ENCODE measurements at regions of chr7 and their contacts with region 1.

Region 1: GRCh38 chr7:105876091-105876963 is at the start of gene ATXN7L1:
- DNase-seq: peak; percentile 95 to 96 (median 96)
- ATAC-seq: peak; percentile 92 to 97 (median 96)
- H3K4me3 ChIP-seq: peak within 1 kb of the TSS; percentile 66 to 90 (median 84)
- H3K27ac ChIP-seq: peak within 1 kb of the TSS; percentile 65 to 90 (median 84)
- H3K4me1 ChIP-seq: peaks cover 0 to 34% (median 10%) of the 10 kb centered on the region in 12 donors
- H3K27me3 ChIP-seq: peaks cover 0 to 3% (median 0%) of the 10 kb centered on the region in 9 donors
- CTCF ChIP-seq: peak in 11 of 12 donors; percentile 6 to 93 (median 64)
- POLR2A ChIP-seq: peak in 1 of 2 donors; percentile 65
- total RNA-seq, gene ATXN7L1: 2.3 to 10.6 (median 5.6) TPM

Region 2: DNA sequence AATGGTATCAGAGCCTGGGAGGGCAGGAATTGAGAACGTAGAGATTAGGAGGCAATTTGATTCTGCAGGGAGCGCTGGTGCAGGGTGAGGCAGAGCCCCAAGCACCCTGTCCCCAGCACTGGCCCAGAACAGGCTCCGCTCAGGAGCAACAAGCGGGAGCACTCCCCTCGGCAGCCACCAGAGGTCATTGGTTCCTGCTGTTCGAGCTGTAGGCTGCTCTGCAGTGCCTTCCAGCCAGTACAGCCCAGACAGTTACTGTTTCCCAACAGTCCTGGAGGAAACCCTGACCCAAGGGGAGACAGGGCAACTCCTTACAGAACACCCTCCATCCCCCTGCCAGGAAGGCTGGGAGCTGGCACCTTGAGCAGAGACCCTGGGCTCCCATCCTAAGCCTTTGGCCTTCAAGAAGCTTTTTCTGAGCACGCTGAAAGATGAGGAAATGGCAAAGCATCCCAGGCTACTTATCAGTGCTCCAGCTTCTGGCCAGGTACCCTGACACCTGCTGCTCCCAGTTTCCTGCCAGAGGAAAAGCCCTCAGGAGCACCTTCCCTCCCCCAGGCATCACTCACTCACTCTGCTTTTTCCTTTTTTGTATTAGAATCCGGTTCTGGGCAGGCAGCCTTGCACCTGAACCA is 223.9 kb before region 1 on chr7:
- intact Hi-C with region 1: loop called in 7 of 10 experiments (anchors 10 kb)
- DNase-seq: peak; percentile 68 to 86 (median 78)
- ATAC-seq: peak; percentile 68 to 94 (median 90)
- H3K4me3 ChIP-seq: no peak overlapping the region
- H3K27ac ChIP-seq: no peak overlapping the region
- H3K4me1 ChIP-seq: peaks cover 0 to 25% (median 15%) of the 10 kb centered on the region in 12 donors
- H3K27me3 ChIP-seq: no peaks in the 10 kb centered on the region
- CTCF ChIP-seq: peak; percentile 81 to 91 (median 86)
- POLR2A ChIP-seq: no peak

Region 3: DNA sequence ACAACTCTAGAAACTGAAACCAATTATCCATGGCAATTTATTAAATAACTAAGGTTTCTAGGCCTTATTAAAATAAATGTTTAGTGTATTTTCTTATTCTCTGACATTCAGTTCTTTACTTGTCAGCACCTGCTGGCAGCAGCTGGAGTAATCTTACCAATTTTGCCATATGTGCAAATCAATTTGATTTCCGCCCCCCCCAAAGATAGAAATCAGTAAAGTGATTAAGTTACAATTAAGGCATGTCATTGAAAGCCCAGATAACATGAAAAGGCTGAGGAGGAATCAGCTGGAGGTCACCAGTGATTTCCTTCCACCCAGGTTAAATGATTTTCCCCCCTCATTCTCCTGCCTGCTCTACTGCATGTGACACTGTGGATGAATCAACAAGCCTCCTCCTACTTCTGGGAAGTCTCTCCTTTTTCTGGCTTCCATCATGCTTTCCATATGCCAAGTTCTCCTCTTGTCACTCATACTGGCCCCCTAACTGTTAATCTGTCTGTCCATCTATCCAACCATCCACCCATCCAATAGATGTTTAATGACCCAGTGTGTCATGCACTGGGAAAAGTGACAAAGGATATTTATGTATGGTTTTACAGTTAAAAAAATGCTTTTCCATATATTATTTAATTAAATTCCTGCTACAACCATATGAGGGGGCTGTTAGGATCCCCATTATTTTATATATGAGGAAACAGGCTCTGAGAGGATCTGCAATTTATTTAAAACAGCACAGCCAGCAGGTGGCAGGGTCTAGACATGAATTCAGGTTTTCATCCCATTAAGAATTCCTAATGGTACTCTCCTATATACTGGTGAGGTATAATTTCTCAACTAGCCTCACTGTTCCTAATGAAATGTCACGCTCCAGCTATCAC is 116.4 kb before region 1 on chr7:
- intact Hi-C with region 1: loop called in 5 of 10 experiments (anchors 5 to 10 kb)
- DNase-seq: peak in 3 of 5 donors; percentile 16 to 42 (median 41)
- ATAC-seq: peak in 3 of 4 donors; percentile 58 to 79 (median 67)
- H3K4me3 ChIP-seq: no peak overlapping the region
- H3K27ac ChIP-seq: no peak overlapping the region
- H3K4me1 ChIP-seq: peaks cover 0 to 16% (median 0%) of the 10 kb centered on the region in 12 donors
- H3K27me3 ChIP-seq: no peaks in the 10 kb centered on the region
- CTCF ChIP-seq: peak; percentile 42 to 68 (median 57)
- POLR2A ChIP-seq: no peak

Region 4: GRCh38 chr7:105800442-105800841 is 75.9 kb before region 1 on chr7:
- intact Hi-C with region 1: loop called in 4 of 10 experiments (anchors 2 to 10 kb)
- DNase-seq: no peak
- ATAC-seq: no peak
- H3K4me3 ChIP-seq: no peak overlapping the region
- H3K27ac ChIP-seq: peak overlapping the region in 2 of 12 donors; percentile 45 to 55
- H3K4me1 ChIP-seq: peaks cover 0 to 24% (median 13%) of the 10 kb centered on the region in 12 donors
- H3K27me3 ChIP-seq: no peaks in the 10 kb centered on the region
- CTCF ChIP-seq: no peak
- POLR2A ChIP-seq: no peak

Region 5: GRCh38 chr7:106009403-106010226 is 133.3 kb after region 1 on chr7:
- intact Hi-C with region 1: loop called in 3 of 10 experiments (anchors 2 to 10 kb)
- DNase-seq: peak; percentile 60 to 90 (median 76)
- ATAC-seq: peak; percentile 83 to 99 (median 95)
- H3K4me3 ChIP-seq: peak overlapping the region in 4 of 12 donors; percentile 5 to 22 (median 22)
- H3K27ac ChIP-seq: peak overlapping the region in 3 of 12 donors; percentile 17 to 53 (median 17)
- H3K4me1 ChIP-seq: peaks cover 0 to 15% (median 2%) of the 10 kb centered on the region in 12 donors
- H3K27me3 ChIP-seq: no peaks in the 10 kb centered on the region
- CTCF ChIP-seq: peak; percentile 89 to 98 (median 95)
- POLR2A ChIP-seq: peak in 1 of 2 donors; percentile 22

Region 6: GRCh38 chr7:106153891-106154449 is 277.6 kb after region 1 on chr7:
- intact Hi-C with region 1: loop called in 1 of 10 experiments (anchors 5 kb)
- DNase-seq: peak; percentile 73 to 89 (median 78)
- ATAC-seq: peak; percentile 89 to 99 (median 97)
- H3K4me3 ChIP-seq: peak overlapping the region in 4 of 12 donors; percentile 10 to 16 (median 13)
- H3K27ac ChIP-seq: no peak overlapping the region
- H3K4me1 ChIP-seq: peaks cover 0 to 19% (median 10%) of the 10 kb centered on the region in 12 donors
- H3K27me3 ChIP-seq: peaks cover 0 to 5% (median 0%) of the 10 kb centered on the region in 9 donors
- CTCF ChIP-seq: peak; percentile 84 to 99 (median 95)
- POLR2A ChIP-seq: no peak